Activated B cell treated with CpG ODN at 0.5 μM for 24 hours (primary cell): ENCODE measurements at regions of chr4 and their contacts with region 1.

Region 1: DNA sequence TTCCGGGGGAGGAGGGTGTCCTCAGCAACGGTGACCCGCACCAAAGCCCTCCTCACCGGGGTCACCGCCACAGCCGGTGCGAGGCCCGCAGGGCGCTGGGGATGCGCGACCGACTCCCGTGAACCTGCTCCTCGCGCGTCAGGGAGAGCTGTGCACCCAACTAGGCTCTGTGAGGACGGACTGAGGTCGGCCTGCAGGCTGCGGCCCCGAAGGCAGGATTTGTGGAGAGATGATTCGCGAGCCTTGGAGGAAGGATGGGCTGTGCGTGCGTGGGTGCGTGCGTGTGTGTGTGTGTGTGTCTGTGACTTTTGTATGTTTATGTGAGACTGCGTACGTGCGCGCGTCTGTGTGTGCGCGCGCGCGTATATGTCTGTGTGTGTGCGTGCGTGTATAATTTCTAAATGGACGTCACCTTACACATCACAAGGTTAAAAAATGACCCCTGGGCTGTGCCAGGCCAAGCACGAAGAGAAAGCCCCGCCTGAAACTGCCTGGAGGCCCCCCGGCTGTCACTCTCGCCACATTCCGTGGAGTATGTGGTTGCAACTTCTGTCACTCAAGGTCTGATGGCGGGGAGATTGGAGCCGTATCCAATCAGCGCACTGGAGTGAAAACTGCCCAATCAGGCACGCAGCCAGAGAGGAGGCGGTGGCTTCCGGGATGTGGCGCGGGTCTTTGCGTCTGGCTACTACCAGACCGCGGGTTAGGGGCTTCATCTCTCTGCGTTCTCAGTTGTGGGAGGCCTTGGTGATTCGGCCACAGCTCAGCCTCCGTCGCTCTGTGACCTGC is at the start of gene ZNF141:
- DNase-seq: peak; percentile 78
- ATAC-seq: peak; percentile 92
- H3K4me3 Mint-ChIP-seq: peak within 1 kb of the TSS; percentile 100
- H3K27ac Mint-ChIP-seq: peak within 1 kb of the TSS; percentile 99
- H3K4me1 Mint-ChIP-seq: peaks cover 38% of the 10 kb centered on the region
- H3K27me3 Mint-ChIP-seq: no peaks in the 10 kb centered on the region
- CTCF ChIP-seq: no peak
- total RNA-seq, gene ZNF141: 36.9 and 47.8 TPM in 2 replicates

Region 2: GRCh38 chr4:242121-242848 is 95.1 kb before region 1 on chr4:
- CTCF ChIA-PET with region 1: no interaction called
- POLR2A ChIA-PET with region 1: interaction called, 3 read pairs
- intact Hi-C with region 1: loop called (anchors 2 kb)
- DNase-seq: peak; percentile 44
- ATAC-seq: peak; percentile 94
- H3K4me3 Mint-ChIP-seq: peak overlapping the region; percentile 89
- H3K27ac Mint-ChIP-seq: peak overlapping the region; percentile 89
- H3K4me1 Mint-ChIP-seq: peaks cover 13% of the 10 kb centered on the region
- H3K27me3 Mint-ChIP-seq: no peaks in the 10 kb centered on the region
- CTCF ChIP-seq: no peak

Region 3: DNA sequence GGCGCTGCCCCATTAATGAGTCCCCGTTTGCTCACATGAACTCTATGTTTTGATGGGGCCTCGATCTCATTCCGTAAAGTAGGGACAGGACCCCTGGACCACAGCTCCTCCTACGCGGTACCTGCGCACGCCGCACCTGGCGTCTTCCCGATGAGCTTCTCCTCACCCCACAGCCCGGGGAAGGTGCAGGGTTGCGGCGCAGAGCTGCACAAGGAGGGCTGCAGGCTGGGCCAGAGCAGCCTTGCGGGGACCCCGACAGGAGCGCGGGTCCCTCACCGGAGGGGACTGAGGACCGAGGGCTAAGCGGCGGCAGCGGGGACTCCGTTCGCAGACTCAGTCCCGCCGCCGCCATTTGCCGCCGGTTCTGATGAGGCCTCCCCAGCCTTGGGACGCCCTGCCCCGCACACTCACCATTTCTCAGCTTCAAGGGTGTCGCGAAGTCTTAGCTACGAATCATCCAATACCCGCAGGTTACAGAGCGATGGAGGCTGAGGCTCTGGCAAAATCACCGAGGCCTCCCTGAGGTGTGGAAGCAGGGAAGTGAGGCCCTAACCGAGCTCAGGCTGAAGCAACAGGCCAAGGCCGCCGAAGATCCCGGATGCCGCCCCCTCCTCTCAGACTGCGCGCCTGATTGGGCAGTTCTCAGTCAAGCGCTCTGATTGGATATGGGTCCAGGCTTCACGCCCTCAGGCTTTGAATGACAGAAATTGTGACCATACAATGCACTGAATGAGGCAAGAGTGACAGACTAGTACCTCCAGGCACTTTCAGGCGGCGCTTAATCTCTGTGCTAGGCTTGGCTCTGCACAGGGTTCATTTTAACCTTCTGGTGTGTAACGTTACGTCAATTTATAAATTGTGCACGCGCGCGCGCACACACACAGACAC is 136.5 kb after region 1 on chr4:
- CTCF ChIA-PET with region 1: no interaction called
- POLR2A ChIA-PET with region 1: interaction called, 11 read pairs
- intact Hi-C with region 1: loop called (anchors 1 kb)
- DNase-seq: peak; percentile 80
- ATAC-seq: peak; percentile 98
- H3K4me3 Mint-ChIP-seq: peak overlapping the region; percentile 99
- H3K27ac Mint-ChIP-seq: peak overlapping the region; percentile 99
- H3K4me1 Mint-ChIP-seq: peaks cover 37% of the 10 kb centered on the region
- H3K27me3 Mint-ChIP-seq: no peaks in the 10 kb centered on the region
- CTCF ChIP-seq: no peak

Region 4: GRCh38 chr4:663438-664428 is 326.4 kb after region 1 on chr4:
- CTCF ChIA-PET with region 1: no interaction called
- POLR2A ChIA-PET with region 1: interaction called, 3 read pairs
- intact Hi-C with region 1: loop called (anchors 1 kb)
- DNase-seq: peak; percentile 69
- ATAC-seq: peak; percentile 90
- H3K4me3 Mint-ChIP-seq: peak overlapping the region; percentile 85
- H3K27ac Mint-ChIP-seq: peak overlapping the region; percentile 80
- H3K4me1 Mint-ChIP-seq: peaks cover 14% of the 10 kb centered on the region
- H3K27me3 Mint-ChIP-seq: no peaks in the 10 kb centered on the region
- CTCF ChIP-seq: no peak